ENCODE measurements at regions of chr19 and their contacts with region 1.

Region 1: GRCh38 chr19:39341719-39342604 is at the start of gene SAMD4B:
- DNase-seq: peak; percentile 99 to 100
- ATAC-seq: peak; percentile 94 to 97 (median 96)
- H3K4me3 ChIP-seq: peak within 1 kb of the TSS; percentile 91
- H3K27ac ChIP-seq: peak within 1 kb of the TSS; percentile 86
- H3K4me1 ChIP-seq: peaks cover 34% of the 10 kb centered on the region
- H3K27me3 ChIP-seq: no peaks in the 10 kb centered on the region
- CTCF ChIP-seq: peak; percentile 79
- total RNA-seq, gene SAMD4B: 34.7 to 66.4 (median 51.7) TPM

Region 2: GRCh38 chr19:39264306-39265290 is 77.4 kb before region 1 on chr19:
- intact Hi-C with region 1: no loop called
- DNase-seq: no peak
- ATAC-seq: no peak
- H3K4me3 ChIP-seq: no peak overlapping the region
- H3K27ac ChIP-seq: no peak overlapping the region
- H3K4me1 ChIP-seq: no peaks in the 10 kb centered on the region
- H3K27me3 ChIP-seq: peaks cover 0 to 65% (median 25%) of the 10 kb centered on the region in 3 donors
- CTCF ChIP-seq: no peak

Region 3: DNA sequence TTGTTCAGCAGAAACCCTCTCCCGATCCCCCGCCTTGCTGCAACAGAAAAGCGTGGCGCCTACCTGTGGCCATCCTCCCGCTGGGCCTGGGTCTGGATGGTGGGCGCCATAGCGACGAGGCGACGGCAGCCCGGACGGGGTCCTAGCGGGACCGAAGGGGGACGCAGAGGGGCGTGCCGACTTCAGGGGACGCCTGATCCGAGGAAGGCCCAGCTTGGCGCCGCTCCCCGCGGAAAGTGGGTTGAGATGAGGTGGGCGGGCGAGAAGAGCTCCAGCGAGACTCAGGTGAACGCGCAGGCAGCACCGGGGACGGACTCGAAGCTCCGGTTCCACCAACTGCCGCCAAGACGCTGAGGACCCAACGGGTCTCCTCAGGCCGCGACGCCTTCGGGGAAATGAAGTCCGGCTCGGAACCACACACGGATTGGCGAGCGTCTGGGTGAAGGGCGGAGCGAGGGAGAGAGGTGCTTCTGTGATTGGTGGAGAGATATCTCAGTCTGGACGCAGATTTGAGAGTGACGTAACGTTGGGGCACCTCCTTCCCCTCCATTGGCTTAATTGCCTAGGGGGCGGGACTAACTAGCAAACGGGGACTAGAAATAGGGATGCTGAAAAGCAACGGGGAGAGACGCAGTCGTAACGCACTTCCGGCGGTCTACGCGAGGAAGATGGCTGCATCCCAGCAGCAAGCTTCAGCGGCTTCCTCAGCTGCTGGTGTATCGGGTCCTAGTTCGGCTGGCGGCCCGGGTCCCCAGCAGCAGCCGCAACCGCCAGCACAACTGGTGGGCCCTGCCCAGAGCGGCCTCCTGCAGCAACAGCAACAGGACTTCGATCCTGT is 49.0 kb after region 1 on chr19 and contains the starts of genes MED29 and PAF1:
- intact Hi-C with region 1: loop called (anchors 5 kb)
- DNase-seq: peak; percentile 96 to 99
- ATAC-seq: peak; percentile 95 to 97 (median 96)
- H3K4me3 ChIP-seq: peak within 1 kb of the TSS; percentile 77
- H3K27ac ChIP-seq: peak within 1 kb of the TSS; percentile 89
- H3K4me1 ChIP-seq: peaks cover 18% of the 10 kb centered on the region
- H3K27me3 ChIP-seq: no peaks in the 10 kb centered on the region
- CTCF ChIP-seq: no peak
- total RNA-seq, gene MED29: 25.0 to 33.6 (median 30.2) TPM
- total RNA-seq, gene PAF1: 33.7 to 38.0 (median 34.6) TPM

Region 4: DNA sequence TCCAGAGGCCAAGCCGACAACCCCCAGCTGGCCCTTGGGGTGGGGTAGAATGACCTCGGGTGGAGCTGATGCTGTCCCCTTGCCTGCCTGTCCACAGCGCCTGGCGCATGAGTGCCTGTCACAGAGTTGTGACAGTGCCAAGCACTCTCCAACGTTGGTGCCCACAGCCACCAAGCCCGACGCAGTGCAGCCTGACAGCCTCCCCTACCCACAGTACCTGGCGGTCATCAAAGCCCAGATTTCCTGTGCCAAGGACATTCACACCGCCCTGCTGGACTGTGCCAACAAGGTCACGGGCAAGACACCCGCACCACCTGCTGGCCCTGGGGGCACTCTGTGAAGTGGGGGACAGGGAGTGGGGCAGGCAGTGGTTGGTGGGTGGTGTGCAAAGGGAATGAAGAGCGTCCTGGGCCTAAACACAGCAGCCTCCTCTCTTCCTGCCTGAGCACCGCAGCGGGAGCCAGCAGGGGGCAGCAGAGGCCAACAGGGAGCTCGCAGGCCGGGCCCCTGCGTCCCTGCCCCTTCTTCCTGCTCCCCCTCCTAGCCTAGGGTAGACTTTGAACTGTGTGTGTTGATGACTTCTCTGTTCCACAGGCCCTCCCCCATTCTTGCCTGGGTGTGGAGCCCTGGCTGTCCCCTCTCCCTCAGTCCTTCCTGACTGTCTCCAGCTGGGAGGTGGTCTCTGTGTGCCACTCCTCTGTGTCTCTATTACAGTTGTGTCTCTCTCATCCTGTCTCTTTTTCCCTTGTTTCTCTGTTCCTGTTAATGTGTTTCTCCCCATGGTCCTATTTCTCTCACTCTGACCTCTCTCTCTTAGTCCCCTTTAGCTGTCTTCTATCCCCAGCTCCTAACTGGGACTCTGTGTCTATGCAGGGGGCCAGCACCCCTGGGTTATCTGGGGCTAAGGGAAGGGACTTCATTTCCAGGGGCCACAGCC is 55.7 kb after region 1 on chr19:
- intact Hi-C with region 1: loop called (anchors 5 kb)
- DNase-seq: peak; percentile 92 to 96
- ATAC-seq: peak; percentile 75 to 84 (median 80)
- H3K4me3 ChIP-seq: peak overlapping the region; percentile 33
- H3K27ac ChIP-seq: peak overlapping the region; percentile 84
- H3K4me1 ChIP-seq: peaks cover 26% of the 10 kb centered on the region
- H3K27me3 ChIP-seq: no peaks in the 10 kb centered on the region
- CTCF ChIP-seq: peak; percentile 98

Region 5: DNA sequence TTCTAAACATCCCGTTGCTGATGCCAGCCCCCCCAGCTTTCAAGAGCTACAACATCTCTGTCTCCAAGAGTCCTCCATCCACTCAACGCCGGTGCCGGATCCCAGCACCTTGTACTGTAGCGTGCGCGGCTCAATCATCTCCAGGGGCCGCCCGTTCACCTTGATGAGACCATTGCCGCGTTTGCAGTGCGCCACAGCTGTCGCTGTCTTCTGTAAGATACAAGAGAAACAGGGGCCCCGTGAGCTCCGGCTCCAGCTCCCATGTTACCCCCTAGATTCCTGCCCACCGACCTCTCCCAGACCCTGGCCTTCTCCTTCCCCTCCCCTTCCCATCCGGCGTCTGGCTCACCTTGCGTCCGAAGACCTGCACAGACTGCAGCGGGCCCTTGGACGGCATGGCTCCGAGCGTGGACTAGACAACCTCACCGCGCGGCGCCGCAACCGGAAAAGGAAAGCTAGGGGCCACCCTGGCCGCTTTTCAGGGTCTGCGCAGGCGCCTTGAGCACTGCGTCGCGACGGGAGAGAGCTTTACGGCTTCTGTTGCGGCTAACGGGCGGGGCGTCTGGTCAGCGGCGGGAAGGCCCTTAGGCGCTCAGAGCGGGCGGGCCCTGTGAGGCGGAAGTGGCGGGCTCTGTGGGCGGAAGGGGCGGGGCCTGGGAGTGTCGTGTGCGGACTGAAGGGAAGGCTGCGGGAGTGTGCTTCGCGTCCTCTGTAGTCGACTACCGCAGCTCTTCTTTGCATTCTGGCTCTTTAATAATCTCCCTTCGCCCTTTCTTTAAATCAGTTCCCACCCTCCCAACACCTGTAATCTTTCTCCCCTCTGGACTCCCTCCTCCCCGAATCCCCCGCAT is 93.8 kb after region 1 on chr19 and contains the start of gene RPS16:
- intact Hi-C with region 1: loop called in 1 of 2 experiments (anchors 10 kb)
- DNase-seq: peak; percentile 99 to 100
- ATAC-seq: peak; percentile 97 to 98 (median 98)
- H3K4me3 ChIP-seq: peak within 1 kb of the TSS; percentile 96
- H3K27ac ChIP-seq: peak within 1 kb of the TSS; percentile 93
- H3K4me1 ChIP-seq: peaks cover 18% of the 10 kb centered on the region
- H3K27me3 ChIP-seq: no peaks in the 10 kb centered on the region
- CTCF ChIP-seq: no peak
- total RNA-seq, gene RPS16: 1,186 to 1,958 (median 1,553) TPM

Region 6: GRCh38 chr19:39502640-39503417 is 160.9 kb after region 1 on chr19:
- intact Hi-C with region 1: no loop called
- DNase-seq: peak; percentile 67 to 72
- ATAC-seq: peak; percentile 46 to 79 (median 72)
- H3K4me3 ChIP-seq: no peak overlapping the region
- H3K27ac ChIP-seq: no peak overlapping the region
- H3K4me1 ChIP-seq: peaks cover 15% of the 10 kb centered on the region
- H3K27me3 ChIP-seq: peaks cover 0 to 92% (median 48%) of the 10 kb centered on the region in 3 donors
- CTCF ChIP-seq: peak; percentile 67

Measured in psoas muscle (tissue), 8 donors.